WTC11 (cell line): ENCODE measurements at regions of chr10 and their contacts with region 1.

Region 1: GRCh38 chr10:79542626-79543025 is 17.6 kb downstream of the SFTPA2 start:
- DNase-seq: no peak
- ATAC-seq: no peak
- H3K4me3 Mint-ChIP-seq: no peak overlapping the region
- H3K27ac Mint-ChIP-seq: no peak overlapping the region
- H3K4me1 Mint-ChIP-seq: no peaks in the 10 kb centered on the region
- H3K27me3 Mint-ChIP-seq: peaks cover 10% of the 10 kb centered on the region
- CTCF ChIP-seq: no peak

Region 2: GRCh38 chr10:79381804-79382221 is 160.8 kb before region 1 on chr10:
- CTCF ChIA-PET with region 1: no interaction called
- POLR2A ChIA-PET with region 1: no interaction called
- DNase-seq: no peak
- ATAC-seq: peak; percentile 25
- H3K4me3 Mint-ChIP-seq: no peak overlapping the region
- H3K27ac Mint-ChIP-seq: peak overlapping the region; percentile 15; the same call in 1 of the 2 replicates
- H3K4me1 Mint-ChIP-seq: 0 out of 2 replicates have a peak, but pooled peaks cover 3% of the 10 kb centered on the region
- H3K27me3 Mint-ChIP-seq: no peaks in the 10 kb centered on the region
- CTCF ChIP-seq: no peak

Region 3: DNA sequence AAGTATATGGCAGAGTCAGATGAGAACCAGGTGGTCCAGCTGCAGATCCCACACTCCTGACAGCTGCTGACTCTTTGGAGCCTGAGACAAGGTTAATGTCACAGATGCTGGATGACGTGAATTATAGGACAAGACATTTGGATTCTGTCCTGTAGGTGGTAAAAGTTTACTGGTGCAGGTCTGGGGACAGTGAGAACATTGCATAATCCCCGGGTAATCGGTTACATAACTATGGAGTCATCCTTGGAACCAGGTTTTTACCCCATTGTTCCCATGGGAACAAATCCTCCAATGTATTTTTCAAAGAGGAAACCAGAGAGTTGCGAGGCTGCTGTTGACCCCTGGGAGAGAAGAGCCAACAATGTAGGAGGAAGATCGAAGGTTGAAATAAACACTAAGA is 69.7 kb before region 1 on chr10:
- CTCF ChIA-PET with region 1: no interaction called
- POLR2A ChIA-PET with region 1: no interaction called
- DNase-seq: no peak
- ATAC-seq: no peak
- H3K4me3 Mint-ChIP-seq: no peak overlapping the region
- H3K27ac Mint-ChIP-seq: no peak overlapping the region
- H3K4me1 Mint-ChIP-seq: no peaks in the 10 kb centered on the region
- H3K27me3 Mint-ChIP-seq: peaks cover 16% of the 10 kb centered on the region
- CTCF ChIP-seq: no peak

Region 4: GRCh38 chr10:79562135-79562756 is 19.6 kb after region 1 on chr10:
- CTCF ChIA-PET with region 1: no interaction called
- POLR2A ChIA-PET with region 1: interaction called, 10 read pairs
- DNase-seq: peak; percentile 74
- ATAC-seq: peak; percentile 96
- H3K4me3 Mint-ChIP-seq: peak overlapping the region; percentile 50
- H3K27ac Mint-ChIP-seq: no peak overlapping the region
- H3K4me1 Mint-ChIP-seq: peaks cover 6% of the 10 kb centered on the region
- H3K27me3 Mint-ChIP-seq: peaks cover 10% of the 10 kb centered on the region
- CTCF ChIP-seq: peak; percentile 71

Region 5: GRCh38 chr10:79588800-79589199 is 46.2 kb after region 1 on chr10:
- CTCF ChIA-PET with region 1: no interaction called
- POLR2A ChIA-PET with region 1: no interaction called
- DNase-seq: no peak
- ATAC-seq: no peak
- H3K4me3 Mint-ChIP-seq: no peak overlapping the region
- H3K27ac Mint-ChIP-seq: no peak overlapping the region
- H3K4me1 Mint-ChIP-seq: no peaks in the 10 kb centered on the region
- H3K27me3 Mint-ChIP-seq: peaks cover 20% of the 10 kb centered on the region
- CTCF ChIP-seq: no peak